ENCODE measurements at regions of chr4 and their contacts with region 1.

Region 1: GRCh38 chr4:70969076-70969475 is 24.4 kb upstream of the DCK start:
- DNase-seq: no peak
- ATAC-seq: no peak
- H3K4me3 ChIP-seq: no peak overlapping the region
- H3K27ac ChIP-seq: no peak overlapping the region
- H3K4me1 ChIP-seq: no peaks in the 10 kb centered on the region
- H3K27me3 ChIP-seq: no peaks in the 10 kb centered on the region
- CTCF ChIP-seq: no peak

Region 2: DNA sequence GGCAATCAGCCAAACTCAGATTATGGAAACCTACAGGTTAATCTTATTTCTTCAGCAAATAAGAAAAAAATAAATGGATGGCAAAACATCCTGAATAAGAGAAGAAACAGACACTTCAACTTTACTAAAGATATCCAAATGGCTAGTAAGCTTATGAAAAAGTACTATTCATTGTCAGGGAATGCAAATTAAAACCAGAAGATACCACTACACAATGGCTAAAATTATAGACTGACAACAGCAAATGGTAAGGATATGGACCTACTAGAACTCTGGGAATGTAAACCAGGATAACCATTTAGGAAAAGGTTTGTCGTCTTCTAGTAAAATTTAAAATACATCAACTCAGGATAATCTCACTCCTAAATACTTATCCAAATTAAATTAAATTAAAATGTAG is 153.7 kb before region 1 on chr4:
- CTCF ChIA-PET with region 1: no interaction called
- POLR2A ChIA-PET with region 1: no interaction called
- in situ Hi-C with region 1: no loop called
- intact Hi-C with region 1: no loop called
- DNase-seq: no peak
- ATAC-seq: no peak
- H3K4me3 ChIP-seq: no peak overlapping the region
- H3K27ac ChIP-seq: no peak overlapping the region
- H3K4me1 ChIP-seq: no peaks in the 10 kb centered on the region
- H3K27me3 ChIP-seq: no peaks in the 10 kb centered on the region
- CTCF ChIP-seq: no peak

Region 3: GRCh38 chr4:70915036-70915815 is 53.9 kb before region 1 on chr4:
- CTCF ChIA-PET with region 1: no interaction called
- POLR2A ChIA-PET with region 1: interaction called, 11 read pairs
- in situ Hi-C with region 1: no loop called
- intact Hi-C with region 1: no loop called
- DNase-seq: no peak
- ATAC-seq: peak; percentile 63
- H3K4me3 ChIP-seq: peak overlapping the region; percentile 11 to 38
- H3K27ac ChIP-seq: peak overlapping the region; percentile 63
- H3K4me1 ChIP-seq: peaks cover 17% of the 10 kb centered on the region
- H3K27me3 ChIP-seq: no peaks in the 10 kb centered on the region
- CTCF ChIP-seq: no peak

Region 4: GRCh38 chr4:71913275-71913674 is 944.2 kb after region 1 on chr4:
- CTCF ChIA-PET with region 1: no interaction called
- POLR2A ChIA-PET with region 1: no interaction called
- in situ Hi-C with region 1: no loop called
- intact Hi-C with region 1: no loop called
- DNase-seq: no peak
- ATAC-seq: no peak
- H3K4me3 ChIP-seq: no peak overlapping the region
- H3K27ac ChIP-seq: no peak overlapping the region
- H3K4me1 ChIP-seq: no peaks in the 10 kb centered on the region
- H3K27me3 ChIP-seq: no peaks in the 10 kb centered on the region
- CTCF ChIP-seq: no peak

Measured in Panc1 (cell line).